Left cardiac atrium (tissue), 4 donors: ENCODE measurements at regions of chr16 and their contacts with region 1.

Region 1: DNA sequence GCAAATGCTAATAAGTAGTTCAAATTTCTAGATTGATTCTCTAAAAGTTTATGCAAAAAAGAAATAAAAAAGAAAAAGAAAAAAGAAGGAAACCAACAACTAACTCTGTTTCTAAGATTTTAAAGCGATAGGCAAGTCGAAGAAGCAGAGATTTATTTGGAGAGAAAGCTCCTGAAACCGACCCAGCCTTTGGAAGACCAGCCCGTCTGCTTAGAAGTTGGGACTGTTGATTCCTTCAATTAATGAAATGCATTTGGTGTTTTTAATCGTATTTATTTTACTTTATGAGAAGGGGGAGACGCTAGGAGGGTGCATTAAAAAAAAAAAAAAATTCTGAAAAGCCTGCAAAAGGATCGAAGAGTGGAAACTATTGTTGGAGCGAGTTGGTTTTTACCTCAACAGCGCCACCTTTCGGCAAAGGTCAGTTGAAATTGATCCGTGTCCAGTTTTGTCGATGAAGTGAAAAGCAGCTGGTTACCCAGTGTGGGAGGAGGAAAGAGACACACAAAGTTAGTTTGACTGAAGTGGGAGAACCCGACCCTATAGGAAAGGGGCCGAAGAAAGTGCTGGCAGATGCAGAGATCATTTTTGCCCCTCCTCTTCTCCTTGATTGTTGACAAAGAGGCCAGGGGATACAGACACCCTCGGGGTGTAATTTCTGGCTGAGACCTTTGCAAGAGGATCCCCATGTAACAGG is 1.5 kb upstream of the MAF start:
- DNase-seq: peak; percentile 75
- ATAC-seq: peak; percentile 19 to 27

Region 2: DNA sequence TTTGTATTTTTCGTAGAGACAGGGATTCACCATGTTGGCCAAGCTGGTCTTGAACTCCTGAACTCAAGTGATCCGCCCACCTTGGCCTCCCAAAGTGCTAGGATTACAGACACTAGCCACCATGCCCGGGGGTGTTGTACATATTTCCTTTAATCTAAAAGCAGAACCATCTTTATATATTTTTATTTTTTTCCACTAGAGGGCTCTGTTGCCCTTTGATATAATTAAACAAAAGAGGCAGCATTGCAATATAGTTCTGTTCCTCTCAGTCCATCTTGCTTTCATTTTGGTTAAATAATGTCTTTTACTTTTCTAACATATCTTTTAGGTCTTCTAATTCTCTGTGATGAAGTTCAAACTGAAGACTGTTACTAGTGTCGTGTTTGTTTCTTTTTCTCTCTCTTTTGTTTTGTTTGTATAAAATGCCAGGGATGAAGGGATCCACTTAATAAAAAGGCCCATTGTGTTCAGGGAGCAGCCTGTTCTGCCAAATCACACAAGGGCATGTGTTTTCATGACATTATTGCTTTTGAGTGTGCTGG is 1479.2 kb before region 1 on chr16:
- intact Hi-C with region 1: loop called in 1 of 2 experiments (anchors 10 kb)
- DNase-seq: no peak
- ATAC-seq: peak; percentile 68 to 84

Region 3: DNA sequence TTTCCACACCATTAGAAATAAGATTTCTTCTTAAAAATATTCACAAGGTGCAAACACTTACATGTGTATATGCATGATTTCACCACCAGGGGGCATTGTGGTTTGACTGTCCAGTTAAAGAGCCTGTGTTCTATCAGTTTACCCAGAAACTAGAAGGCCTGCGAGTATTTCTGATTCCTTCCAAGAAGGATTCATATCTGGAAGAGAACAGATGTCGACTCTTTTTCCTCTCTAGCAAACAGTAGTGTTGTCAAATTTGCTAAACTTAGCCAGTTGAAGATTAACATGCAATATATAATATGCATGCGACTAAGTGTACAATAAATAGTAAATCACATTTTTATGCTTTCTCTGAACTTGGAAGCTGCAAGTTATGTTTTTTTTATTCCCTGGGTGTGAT is 1098.5 kb before region 1 on chr16:
- intact Hi-C with region 1: loop called (anchors 5 to 10 kb)
- DNase-seq: no peak
- ATAC-seq: no peak

Region 4: DNA sequence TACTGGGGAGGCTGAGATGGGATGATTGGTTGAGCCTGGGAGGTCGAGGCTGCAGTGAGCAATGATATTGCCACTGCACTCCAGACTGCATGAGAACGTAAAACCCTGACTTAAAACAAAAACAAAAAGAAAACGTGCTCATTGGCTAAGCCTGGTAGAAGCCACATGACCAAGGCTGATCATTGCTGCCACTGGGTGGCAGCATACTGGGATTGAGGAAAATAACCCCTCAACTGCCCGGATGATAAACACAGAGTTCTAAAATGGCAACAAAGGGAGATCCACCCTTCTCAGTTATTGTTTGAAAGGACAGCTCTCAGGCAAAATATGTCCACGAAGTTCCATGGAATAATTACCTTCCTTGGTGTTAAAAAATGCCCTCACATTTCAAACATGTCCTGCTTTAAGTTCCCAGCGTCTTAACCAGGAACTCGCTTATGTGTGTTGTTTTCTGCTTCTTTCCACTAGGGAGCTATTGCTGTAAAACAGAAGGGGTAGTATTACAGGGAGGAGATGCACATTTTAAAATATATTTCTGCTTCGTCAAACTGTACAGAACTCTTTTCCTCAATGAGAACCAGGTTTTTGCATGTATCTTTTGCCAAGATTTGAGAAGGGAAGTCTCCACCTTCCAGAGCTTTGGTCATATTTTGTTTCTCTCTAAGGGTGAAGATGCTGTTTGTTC is 676.9 kb before region 1 on chr16:
- intact Hi-C with region 1: loop called in 1 of 2 experiments (anchors 2 kb)
- DNase-seq: peak; percentile 36
- ATAC-seq: no peak

Region 5: GRCh38 chr16:79278506-79278905 is 323.6 kb before region 1 on chr16:
- intact Hi-C with region 1: loop called in 1 of 2 experiments (anchors 10 kb)
- DNase-seq: no peak
- ATAC-seq: peak in 1 of 2 donors; percentile 61

Region 6: DNA sequence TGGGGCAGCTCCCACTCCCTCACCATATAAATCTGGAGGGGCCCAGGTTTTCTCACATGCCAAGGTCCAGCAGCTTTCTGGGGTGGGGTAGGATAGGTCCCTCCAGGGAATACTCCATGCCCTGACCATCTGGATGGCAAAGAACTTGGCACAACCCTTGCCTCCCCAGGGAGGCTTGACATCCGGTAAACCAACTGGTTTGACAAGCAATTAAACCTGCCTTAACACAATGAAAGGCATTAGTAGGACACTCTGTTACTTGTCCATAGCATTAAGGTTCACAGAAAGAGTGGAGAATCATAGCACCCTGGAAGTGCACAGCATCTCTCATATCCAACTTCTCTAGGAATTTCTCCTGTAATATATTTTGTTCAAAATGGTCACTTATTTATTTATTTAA is 62.3 kb after region 1 on chr16:
- intact Hi-C with region 1: no loop called
- DNase-seq: no peak
- ATAC-seq: no peak

Region 7: GRCh38 chr16:80084685-80085084 is 482.6 kb after region 1 on chr16:
- intact Hi-C with region 1: loop called in 1 of 2 experiments (anchors 10 kb)
- DNase-seq: peak; percentile 48
- ATAC-seq: peak; percentile 86 to 97